ENCODE measurements at regions of chr3 and their contacts with region 1.

Region 1: DNA sequence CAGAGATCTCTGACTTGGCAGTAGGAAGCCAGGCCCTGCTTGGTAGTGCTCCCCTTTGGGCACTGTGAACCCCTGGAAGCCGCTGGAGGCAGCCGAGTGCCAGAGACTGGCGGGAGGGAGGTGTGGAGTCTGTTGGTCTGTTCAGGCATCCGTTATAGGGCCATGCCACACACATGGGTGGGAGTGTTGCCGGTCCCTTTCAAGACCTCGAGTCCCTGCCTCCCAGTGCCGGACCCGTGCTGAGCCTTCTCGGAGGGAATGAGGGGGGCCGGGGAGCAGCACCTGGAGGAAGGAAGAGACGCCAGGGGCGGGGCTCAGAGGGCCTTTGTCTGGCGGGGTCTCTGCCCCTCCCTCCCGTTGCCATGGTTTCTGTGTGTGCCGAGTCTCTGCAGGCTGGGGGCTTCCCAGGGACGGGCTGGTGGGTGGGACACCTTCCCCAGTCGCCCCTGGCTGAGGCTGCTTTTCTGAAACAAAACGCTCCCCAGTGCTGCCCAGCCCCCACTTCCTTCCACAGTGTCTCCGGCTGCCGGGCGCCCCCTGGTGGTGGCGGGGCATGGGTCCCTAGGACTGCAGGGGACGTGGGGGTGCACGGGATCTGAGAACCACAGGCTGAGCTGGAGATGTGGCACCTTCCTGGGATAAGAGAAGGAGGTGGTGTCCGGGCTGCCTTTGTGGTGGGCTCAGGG is 10.0 kb downstream of the GNAI2 start:
- DNase-seq: peak; percentile 99
- ATAC-seq: peak; percentile 78
- H3K4me3 Mint-ChIP-seq: peak overlapping the region; percentile 86
- H3K27ac Mint-ChIP-seq: peak overlapping the region; percentile 85
- H3K4me1 Mint-ChIP-seq: peaks cover 55% of the 10 kb centered on the region
- H3K27me3 Mint-ChIP-seq: no peaks in the 10 kb centered on the region

Region 2: GRCh38 chr3:50211930-50212329 is 34.0 kb before region 1 on chr3:
- POLR2A ChIA-PET with region 1: no interaction called
- DNase-seq: no peak
- ATAC-seq: peak; percentile 24
- H3K4me3 Mint-ChIP-seq: no peak overlapping the region
- H3K27ac Mint-ChIP-seq: peak overlapping the region; percentile 25
- H3K4me1 Mint-ChIP-seq: peaks cover 3% of the 10 kb centered on the region
- H3K27me3 Mint-ChIP-seq: peaks cover 16% of the 10 kb centered on the region

Region 3: DNA sequence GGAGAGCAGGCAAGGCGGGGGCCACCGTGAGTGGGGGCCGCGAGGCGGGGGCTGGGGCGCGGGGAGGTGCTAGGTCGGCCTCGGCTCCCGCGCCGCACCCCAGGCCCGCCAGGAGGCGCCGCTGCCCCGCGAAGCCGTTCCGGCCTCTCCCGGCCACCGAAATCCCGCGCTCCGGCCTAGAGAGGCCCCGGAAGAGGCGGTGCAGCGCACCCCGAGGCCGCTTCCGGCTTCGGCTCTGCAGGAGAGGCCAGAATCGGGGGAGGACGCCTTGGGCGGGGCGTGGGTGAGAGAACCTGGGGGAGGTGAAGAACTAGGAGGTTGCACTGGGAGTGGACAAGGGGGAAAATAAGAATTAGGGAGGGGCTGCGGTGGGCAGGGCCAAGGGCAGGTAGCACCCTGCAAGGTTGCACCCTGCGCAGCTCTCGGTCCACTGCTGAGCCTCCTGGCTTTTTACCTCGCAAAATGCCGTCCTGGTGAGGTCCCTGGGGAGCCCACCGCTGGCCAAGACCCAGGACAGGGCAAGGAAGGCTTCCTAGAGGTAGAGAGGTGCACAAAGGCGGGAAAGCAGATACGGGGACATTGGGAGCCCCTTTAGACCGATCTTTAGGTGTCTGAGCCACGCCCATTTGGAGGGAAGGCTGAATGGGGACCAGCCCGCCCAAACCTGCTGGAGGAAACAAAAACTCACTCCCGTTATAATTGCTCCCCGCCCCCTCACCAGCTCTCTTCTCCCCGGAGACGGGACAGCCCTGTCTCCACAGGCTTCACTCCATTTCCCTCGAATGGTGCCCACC is 18.4 kb before region 1 on chr3:
- POLR2A ChIA-PET with region 1: interaction called, 47 read pairs
- DNase-seq: peak; percentile 97
- ATAC-seq: peak; percentile 90
- H3K4me3 Mint-ChIP-seq: peak overlapping the region; percentile 97
- H3K27ac Mint-ChIP-seq: peak overlapping the region; percentile 94
- H3K4me1 Mint-ChIP-seq: peaks cover 17% of the 10 kb centered on the region
- H3K27me3 Mint-ChIP-seq: peaks cover 11% of the 10 kb centered on the region

Region 4: DNA sequence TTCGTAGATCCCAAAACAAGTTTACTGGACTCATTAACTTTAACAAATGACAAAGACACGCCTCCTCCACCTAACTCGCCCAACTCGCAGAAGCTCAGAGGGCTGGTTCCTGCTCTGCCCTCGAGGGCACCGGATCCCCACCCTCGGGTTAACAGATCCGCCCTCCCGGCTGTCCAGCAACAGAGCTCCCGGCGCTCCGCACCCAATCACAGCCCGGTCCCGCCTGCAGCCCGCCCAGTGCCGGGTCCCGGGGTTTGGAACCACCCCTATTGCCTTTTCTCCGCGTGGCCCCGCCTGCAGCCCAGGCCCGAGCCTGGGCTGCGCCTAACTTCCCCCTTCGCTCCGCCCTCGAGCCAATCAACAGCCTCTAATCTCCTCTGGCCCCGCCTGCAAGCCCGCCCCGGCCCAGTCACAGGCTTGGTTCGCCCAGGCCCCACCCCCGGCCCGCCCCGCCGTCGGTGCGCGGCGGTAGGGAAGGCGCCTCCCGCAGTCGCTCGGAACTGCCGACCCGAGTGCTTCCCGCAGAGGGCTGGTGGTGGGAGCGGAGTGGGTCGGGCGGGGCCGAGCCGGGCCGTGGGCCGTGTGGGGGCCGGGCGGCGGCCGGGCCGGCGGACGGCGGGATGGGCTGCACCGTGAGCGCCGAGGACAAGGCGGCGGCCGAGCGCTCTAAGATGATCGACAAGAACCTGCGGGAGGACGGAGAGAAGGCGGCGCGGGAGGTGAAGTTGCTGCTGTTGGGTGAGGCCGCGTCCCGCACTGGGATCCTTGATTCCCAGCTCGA is 10.1 kb before region 1 on chr3 and contains the start of gene GNAI2:
- POLR2A ChIA-PET with region 1: interaction called, 48 read pairs
- DNase-seq: peak; percentile 98
- ATAC-seq: peak; percentile 90
- H3K4me3 Mint-ChIP-seq: peak within 1 kb of the TSS; percentile 100
- H3K27ac Mint-ChIP-seq: peak within 1 kb of the TSS; percentile 99
- H3K4me1 Mint-ChIP-seq: peaks cover 22% of the 10 kb centered on the region
- H3K27me3 Mint-ChIP-seq: no peaks in the 10 kb centered on the region
- total RNA-seq, gene GNAI2: 435 to 448 TPM

Region 5: DNA sequence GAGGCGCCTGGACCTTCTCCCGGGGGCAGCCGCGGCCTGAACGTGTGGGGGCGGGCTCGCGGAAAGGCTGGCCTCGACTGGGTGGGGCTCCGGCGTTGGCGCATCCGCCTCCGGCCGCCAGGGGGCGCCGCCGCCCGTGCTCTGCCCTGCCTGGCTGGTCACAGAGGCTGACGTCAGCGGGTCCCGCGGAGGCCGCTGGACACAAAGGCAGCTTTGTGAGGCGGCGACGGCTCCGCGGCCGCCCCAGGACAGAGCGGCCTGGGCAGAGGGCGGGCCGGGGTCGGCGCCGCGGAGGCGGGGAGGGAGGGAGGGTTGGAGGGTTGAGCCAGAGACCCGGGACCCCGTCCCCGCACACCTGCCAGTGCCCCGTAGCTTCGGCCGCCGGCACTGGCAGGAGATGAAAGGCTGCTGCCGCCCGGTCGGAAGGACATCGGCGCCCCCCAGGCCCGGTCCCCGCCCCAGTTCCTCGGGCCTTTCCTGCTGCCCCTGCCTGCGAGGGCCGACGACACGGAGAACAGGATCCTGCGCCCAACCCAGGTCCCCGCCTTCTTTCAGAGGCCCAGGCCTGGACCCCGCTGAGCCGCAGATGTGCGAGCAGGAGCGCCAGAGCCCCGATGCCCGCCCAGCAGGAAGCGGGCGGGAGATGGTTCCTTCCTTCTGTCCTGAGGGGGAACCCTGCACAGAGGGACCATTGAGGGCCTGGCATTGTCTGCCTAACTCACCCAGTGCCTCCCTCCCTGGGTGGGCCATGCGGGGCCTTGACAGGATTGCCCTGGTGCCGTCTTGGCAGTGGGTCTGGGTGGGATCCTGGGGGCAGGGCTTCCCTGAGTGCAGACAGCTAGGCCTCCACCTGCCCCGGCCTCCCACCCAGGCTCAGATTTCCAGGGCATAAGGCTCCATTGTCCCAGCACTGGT is 14.3 kb after region 1 on chr3:
- POLR2A ChIA-PET with region 1: interaction called, 14 read pairs
- DNase-seq: peak; percentile 93
- ATAC-seq: peak; percentile 94
- H3K4me3 Mint-ChIP-seq: peak overlapping the region; percentile 72
- H3K27ac Mint-ChIP-seq: peak overlapping the region; percentile 90
- H3K4me1 Mint-ChIP-seq: peaks cover 5% of the 10 kb centered on the region
- H3K27me3 Mint-ChIP-seq: no peaks in the 10 kb centered on the region

Region 6: GRCh38 chr3:50623840-50624474 is 378.0 kb after region 1 on chr3:
- POLR2A ChIA-PET with region 1: no interaction called
- DNase-seq: peak; percentile 56
- ATAC-seq: peak; percentile 79
- H3K4me3 Mint-ChIP-seq: peak overlapping the region; percentile 72
- H3K27ac Mint-ChIP-seq: peak overlapping the region; percentile 89
- H3K4me1 Mint-ChIP-seq: peaks cover 73% of the 10 kb centered on the region
- H3K27me3 Mint-ChIP-seq: no peaks in the 10 kb centered on the region

Measured in activated naive CD8-positive, alpha-beta T cell treated with anti-CD3 and anti-CD28 coated beads, Interleukin-2, amount 10 ng/mL, durations not matched to agents 7 days and 5 days (primary cell).